Activated naive CD8-positive, alpha-beta T cell treated with anti-CD3 and anti-CD28 coated beads, Interleukin-2, amount 10 ng/mL, durations not matched to agents 7 days and 5 days (primary cell): ENCODE measurements at regions of chr2 and their contacts with region 1.

Region 1: DNA sequence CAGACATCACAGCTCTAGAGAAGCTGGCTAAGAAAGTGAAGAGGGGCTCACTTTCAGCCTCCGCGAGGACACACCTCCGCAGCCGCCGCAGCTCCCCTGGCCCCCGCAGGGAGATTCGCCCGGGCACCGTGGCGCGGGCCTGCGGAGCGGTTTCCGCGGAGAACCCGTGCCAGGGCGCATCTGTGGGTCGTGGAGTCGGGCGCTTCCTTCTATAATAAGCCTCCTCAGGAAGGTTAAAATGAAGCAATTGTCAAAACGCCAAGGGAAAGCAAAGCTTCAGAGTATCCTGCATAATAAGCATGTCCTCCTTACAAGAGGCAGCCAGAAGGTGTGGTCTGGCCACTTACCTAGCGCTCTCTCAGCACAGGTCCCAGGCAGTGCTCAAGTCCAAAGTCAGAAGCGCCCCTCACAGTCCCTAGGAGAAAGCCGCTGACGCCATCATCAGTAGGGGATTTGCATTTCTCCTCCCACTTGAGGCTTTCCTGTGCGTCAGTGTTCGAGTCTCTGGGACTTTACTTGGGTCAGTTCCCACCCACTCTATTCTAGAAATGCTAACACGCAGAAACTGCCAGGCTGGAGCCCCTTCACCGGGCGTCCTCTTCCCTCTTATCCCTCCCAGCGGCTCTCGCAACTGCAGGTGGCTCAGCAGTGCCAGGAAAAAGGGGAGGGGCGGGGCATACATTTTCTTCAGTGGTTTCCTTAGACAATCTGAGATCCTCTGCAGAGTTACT is at the start of gene STAT4:
- DNase-seq: peak; percentile 76
- ATAC-seq: peak; percentile 85
- H3K4me3 Mint-ChIP-seq: peak within 1 kb of the TSS; percentile 89
- H3K27ac Mint-ChIP-seq: peak within 1 kb of the TSS; percentile 94
- H3K4me1 Mint-ChIP-seq: peaks cover 57% of the 10 kb centered on the region
- H3K27me3 Mint-ChIP-seq: no peaks in the 10 kb centered on the region
- total RNA-seq, gene STAT4: 170 to 177 TPM

Region 2: DNA sequence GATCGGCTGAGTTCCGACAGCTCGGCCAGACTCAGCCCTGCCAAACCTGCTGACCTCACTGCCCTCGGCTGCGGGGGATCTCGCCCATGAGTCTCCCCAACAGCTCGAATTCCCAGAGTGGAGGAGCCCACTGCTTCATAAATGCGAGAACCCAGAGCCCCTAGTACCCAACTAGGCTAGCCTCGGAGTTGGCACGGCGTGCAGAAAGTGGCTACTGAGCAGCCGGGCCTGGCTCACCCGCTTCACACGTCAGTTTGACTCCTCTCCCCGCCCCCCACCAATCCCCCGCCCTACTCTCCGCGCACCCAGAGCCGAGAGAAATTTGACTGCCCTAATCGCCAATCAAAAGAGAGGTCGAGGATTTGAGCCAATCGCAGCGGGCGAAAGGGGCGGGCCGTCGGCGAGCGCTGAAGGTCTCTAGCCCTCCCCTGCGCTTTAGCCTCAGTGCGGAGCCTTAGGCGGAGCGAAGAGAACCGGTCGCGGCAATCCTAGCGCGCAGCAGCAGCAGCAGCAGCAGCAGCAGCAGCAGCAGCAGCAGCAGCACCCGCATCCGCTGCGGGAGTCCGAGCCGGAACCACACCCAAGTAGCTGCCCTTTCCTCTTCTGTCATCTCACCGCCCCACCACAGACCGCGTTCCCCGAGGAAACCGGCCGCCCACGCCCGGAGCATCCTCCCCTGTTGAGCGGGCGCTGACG is 270.2 kb before region 1 on chr2 and contains the start of gene GLS:
- POLR2A ChIA-PET with region 1: interaction called, 12 read pairs
- DNase-seq: peak; percentile 94
- ATAC-seq: peak; percentile 80
- H3K4me3 Mint-ChIP-seq: peak within 1 kb of the TSS; percentile 100
- H3K27ac Mint-ChIP-seq: peak within 1 kb of the TSS; percentile 100
- H3K4me1 Mint-ChIP-seq: peaks cover 39% of the 10 kb centered on the region
- H3K27me3 Mint-ChIP-seq: no peaks in the 10 kb centered on the region
- total RNA-seq, gene GLS: 175 to 187 TPM

Region 3: DNA sequence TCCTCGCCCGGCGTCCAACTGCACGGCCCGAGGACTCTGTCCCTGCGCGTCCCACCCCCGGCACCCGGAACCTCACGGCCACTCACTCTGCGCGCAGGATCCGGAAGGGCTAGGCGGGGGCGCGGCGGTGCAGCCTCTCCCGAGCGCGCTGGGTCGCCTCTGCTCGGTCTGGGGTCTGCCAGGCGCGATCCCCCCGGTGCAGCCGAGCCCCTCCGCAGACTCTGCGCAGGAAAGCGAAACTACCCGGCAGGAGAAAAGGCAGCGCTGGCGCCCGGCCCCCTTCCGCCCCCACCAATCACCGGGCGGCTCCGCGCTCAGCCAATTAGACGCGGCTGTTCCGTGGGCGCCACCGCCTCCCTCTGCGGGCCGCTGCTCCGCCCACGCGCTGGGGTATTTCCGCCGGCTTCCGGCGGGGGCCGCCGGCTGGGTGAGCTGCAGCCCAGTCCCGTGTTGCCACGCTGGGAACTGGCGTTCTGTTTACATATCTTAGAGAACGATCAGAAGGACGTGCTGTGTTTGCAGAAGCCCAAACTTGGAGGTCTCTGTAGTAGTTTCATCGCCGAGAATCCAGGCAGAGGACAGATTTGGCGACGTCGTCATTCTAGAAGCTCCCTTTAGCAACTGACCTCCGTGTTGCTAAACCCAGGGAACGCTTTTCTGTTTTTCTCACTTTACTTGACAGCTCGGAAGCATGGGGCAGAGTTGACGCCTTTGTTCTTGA is 136.7 kb before region 1 on chr2 and contains the start of gene STAT1:
- POLR2A ChIA-PET with region 1: interaction called, 52 read pairs
- DNase-seq: peak; percentile 100
- ATAC-seq: peak; percentile 87
- H3K4me3 Mint-ChIP-seq: no peak within 1 kb of the TSS
- H3K27ac Mint-ChIP-seq: no peak within 1 kb of the TSS
- H3K4me1 Mint-ChIP-seq: peaks cover 35% of the 10 kb centered on the region
- H3K27me3 Mint-ChIP-seq: no peaks in the 10 kb centered on the region
- total RNA-seq, gene STAT1: 544 to 571 TPM

Region 4: GRCh38 chr2:191020221-191020741 is 130.5 kb before region 1 on chr2:
- POLR2A ChIA-PET with region 1: interaction called, 29 read pairs
- DNase-seq: peak; percentile 99
- ATAC-seq: peak; percentile 80
- H3K4me3 Mint-ChIP-seq: no peak overlapping the region
- H3K27ac Mint-ChIP-seq: no peak overlapping the region
- H3K4me1 Mint-ChIP-seq: peaks cover 32% of the 10 kb centered on the region
- H3K27me3 Mint-ChIP-seq: no peaks in the 10 kb centered on the region

Region 5: GRCh38 chr2:191051825-191052778 is 98.7 kb before region 1 on chr2:
- POLR2A ChIA-PET with region 1: interaction called, 100 read pairs
- DNase-seq: no peak
- ATAC-seq: peak; percentile 48
- H3K4me3 Mint-ChIP-seq: no peak overlapping the region
- H3K27ac Mint-ChIP-seq: no peak overlapping the region
- H3K4me1 Mint-ChIP-seq: peaks cover 20% of the 10 kb centered on the region
- H3K27me3 Mint-ChIP-seq: no peaks in the 10 kb centered on the region

Region 6: GRCh38 chr2:191066197-191066918 is 84.4 kb before region 1 on chr2:
- POLR2A ChIA-PET with region 1: interaction called, 226 read pairs
- DNase-seq: no peak
- ATAC-seq: peak; percentile 27
- H3K4me3 Mint-ChIP-seq: peak overlapping the region; percentile 88
- H3K27ac Mint-ChIP-seq: peak overlapping the region; percentile 92
- H3K4me1 Mint-ChIP-seq: peaks cover 64% of the 10 kb centered on the region
- H3K27me3 Mint-ChIP-seq: no peaks in the 10 kb centered on the region

Region 7: GRCh38 chr2:191128172-191128910 is 22.4 kb before region 1 on chr2:
- POLR2A ChIA-PET with region 1: interaction called, 26 read pairs
- DNase-seq: no peak
- ATAC-seq: peak; percentile 87
- H3K4me3 Mint-ChIP-seq: peak overlapping the region; percentile 69
- H3K27ac Mint-ChIP-seq: peak overlapping the region; percentile 90
- H3K4me1 Mint-ChIP-seq: peaks cover 64% of the 10 kb centered on the region
- H3K27me3 Mint-ChIP-seq: no peaks in the 10 kb centered on the region